Psoas muscle (tissue), 8 donors: ENCODE measurements at regions of chr3 and their contacts with region 1.

Region 1: DNA sequence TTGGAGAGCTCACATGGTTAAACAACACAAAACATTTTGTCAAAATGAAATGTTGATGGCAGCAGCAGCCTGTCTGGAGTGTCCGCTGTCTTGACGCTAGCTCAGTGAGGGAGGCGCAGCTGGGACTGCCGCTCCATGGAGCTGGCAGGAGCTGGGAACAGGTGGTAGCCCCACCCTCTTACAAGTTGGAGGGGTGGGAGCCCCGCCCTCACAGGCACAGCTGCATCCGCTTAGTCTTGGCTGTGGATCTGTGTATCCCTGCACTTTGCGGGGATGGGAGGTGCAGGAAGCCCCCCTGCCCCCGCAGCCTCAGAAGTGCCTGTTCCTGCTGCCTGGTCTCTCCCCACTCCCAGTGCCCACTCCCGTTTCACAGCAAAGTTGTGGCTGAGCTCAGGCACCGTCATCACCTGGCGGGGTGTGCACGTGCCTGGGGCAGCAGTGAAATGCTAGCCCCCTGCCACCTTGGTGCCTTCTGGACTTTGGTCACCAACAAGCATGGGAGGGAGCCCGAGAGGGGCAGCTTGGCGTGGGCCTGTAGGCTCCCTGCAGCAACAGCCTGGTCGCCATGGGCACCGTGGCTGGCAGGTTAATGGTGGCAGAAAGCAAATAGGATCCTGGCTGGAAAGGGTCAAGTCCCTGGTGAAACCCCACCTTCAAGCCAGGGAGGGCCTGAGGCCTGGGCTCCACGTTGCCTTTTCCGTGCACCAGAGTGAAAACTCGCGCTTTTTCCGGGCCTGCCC is 53.8 kb upstream of the CADM2 start:
- DNase-seq: peak; percentile 46 to 81
- ATAC-seq: peak; percentile 96 to 99 (median 99)
- H3K4me3 ChIP-seq: peak overlapping the region; percentile 46
- H3K27ac ChIP-seq: no peak overlapping the region
- H3K4me1 ChIP-seq: no peaks in the 10 kb centered on the region
- H3K27me3 ChIP-seq: peaks cover 0 to 3% (median 0%) of the 10 kb centered on the region in 3 donors
- CTCF ChIP-seq: no peak

Region 2: GRCh38 chr3:84825817-84826216 is 79.2 kb before region 1 on chr3:
- intact Hi-C with region 1: no loop called
- DNase-seq: no peak
- ATAC-seq: no peak
- H3K4me3 ChIP-seq: no peak overlapping the region
- H3K27ac ChIP-seq: no peak overlapping the region
- H3K4me1 ChIP-seq: no peaks in the 10 kb centered on the region
- H3K27me3 ChIP-seq: no peaks in the 10 kb centered on the region
- CTCF ChIP-seq: no peak

Region 3: GRCh38 chr3:84958495-84959469 is 53.8 kb after region 1 on chr3 and contains the start of gene CADM2:
- intact Hi-C with region 1: loop called in 1 of 2 experiments (anchors 5 kb)
- DNase-seq: peak; percentile 90 to 94
- ATAC-seq: peak; percentile 92 to 99 (median 98)
- H3K4me3 ChIP-seq: peak within 1 kb of the TSS; percentile 77
- H3K27ac ChIP-seq: peak within 1 kb of the TSS; percentile 58
- H3K4me1 ChIP-seq: no peaks in the 10 kb centered on the region
- H3K27me3 ChIP-seq: peaks cover 0 to 13% (median 0%) of the 10 kb centered on the region in 3 donors
- CTCF ChIP-seq: peak; percentile 28
- total RNA-seq, gene CADM2: 5.1 to 15.7 (median 5.8) TPM